K562 (cell line): ENCODE measurements at regions of chr19 and their contacts with region 1.

Region 1: GRCh38 chr19:13069415-13070359 is 33.0 kb downstream of the LYL1 start:
- DNase-seq: peak; percentile 91 to 94 (median 92)
- ATAC-seq: peak; percentile 86
- H3K4me3 ChIP-seq: no peak overlapping the region
- H3K27ac ChIP-seq: peak overlapping the region; percentile 63
- H3K4me1 ChIP-seq: peaks cover 43 to 84% of the 10 kb centered on the region in 2 experiments
- H3K27me3 ChIP-seq: no peaks in the 10 kb centered on the region
- CTCF ChIP-seq: peak in 2 of 3 experiments; percentile 19 to 48; a peak in 3 of 6 replicates
- EP300 ChIP-seq: peak; percentile 99
- POLR2A ChIP-seq: no peak
- RAD21 ChIP-seq: no peak

Region 2: GRCh38 chr19:13055213-13056051 is 14.3 kb before region 1 on chr19:
- CTCF ChIA-PET with region 1: no interaction called
- POLR2A ChIA-PET with region 1: interaction called, 11 read pairs
- in situ Hi-C with region 1: no loop called
- intact Hi-C with region 1: no loop called
- DNase-seq: no peak
- ATAC-seq: no peak
- H3K4me3 ChIP-seq: no peak overlapping the region
- H3K27ac ChIP-seq: no peak overlapping the region
- H3K4me1 ChIP-seq: peaks cover 11 to 55% of the 10 kb centered on the region in 2 experiments
- H3K27me3 ChIP-seq: no peaks in the 10 kb centered on the region
- CTCF ChIP-seq: no peak
- EP300 ChIP-seq: no peak
- POLR2A ChIP-seq: no peak
- RAD21 ChIP-seq: no peak

Region 3: DNA sequence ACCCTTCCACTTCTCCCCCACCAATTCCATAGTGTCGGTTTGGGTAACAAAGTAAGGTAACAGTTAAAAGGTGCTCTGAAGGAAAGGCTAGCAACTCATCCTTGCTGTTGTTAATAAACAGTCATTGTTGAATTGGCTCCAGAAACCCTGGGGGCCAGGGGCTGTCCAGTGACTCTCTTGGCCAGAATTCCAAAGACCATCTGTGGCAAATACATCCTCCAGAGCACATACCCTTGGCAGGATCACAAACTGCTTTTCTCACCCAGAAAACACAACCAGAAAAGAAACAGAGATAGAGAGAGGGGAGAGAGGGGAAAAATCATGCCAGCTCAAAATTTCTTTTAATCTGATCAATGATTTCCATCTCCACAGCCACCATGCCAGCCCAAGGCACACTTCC is 414.5 kb after region 1 on chr19:
- CTCF ChIA-PET with region 1: no interaction called
- POLR2A ChIA-PET with region 1: no interaction called
- in situ Hi-C with region 1: no loop called
- intact Hi-C with region 1: no loop called
- DNase-seq: no peak
- ATAC-seq: no peak
- H3K4me3 ChIP-seq: no peak overlapping the region
- H3K27ac ChIP-seq: no peak overlapping the region
- H3K4me1 ChIP-seq: no peaks in the 10 kb centered on the region
- H3K27me3 ChIP-seq: no peaks in the 10 kb centered on the region
- CTCF ChIP-seq: no peak
- EP300 ChIP-seq: no peak
- POLR2A ChIP-seq: no peak
- RAD21 ChIP-seq: no peak